ENCODE measurements at regions of chr17 and their contacts with region 1.

Region 1: DNA sequence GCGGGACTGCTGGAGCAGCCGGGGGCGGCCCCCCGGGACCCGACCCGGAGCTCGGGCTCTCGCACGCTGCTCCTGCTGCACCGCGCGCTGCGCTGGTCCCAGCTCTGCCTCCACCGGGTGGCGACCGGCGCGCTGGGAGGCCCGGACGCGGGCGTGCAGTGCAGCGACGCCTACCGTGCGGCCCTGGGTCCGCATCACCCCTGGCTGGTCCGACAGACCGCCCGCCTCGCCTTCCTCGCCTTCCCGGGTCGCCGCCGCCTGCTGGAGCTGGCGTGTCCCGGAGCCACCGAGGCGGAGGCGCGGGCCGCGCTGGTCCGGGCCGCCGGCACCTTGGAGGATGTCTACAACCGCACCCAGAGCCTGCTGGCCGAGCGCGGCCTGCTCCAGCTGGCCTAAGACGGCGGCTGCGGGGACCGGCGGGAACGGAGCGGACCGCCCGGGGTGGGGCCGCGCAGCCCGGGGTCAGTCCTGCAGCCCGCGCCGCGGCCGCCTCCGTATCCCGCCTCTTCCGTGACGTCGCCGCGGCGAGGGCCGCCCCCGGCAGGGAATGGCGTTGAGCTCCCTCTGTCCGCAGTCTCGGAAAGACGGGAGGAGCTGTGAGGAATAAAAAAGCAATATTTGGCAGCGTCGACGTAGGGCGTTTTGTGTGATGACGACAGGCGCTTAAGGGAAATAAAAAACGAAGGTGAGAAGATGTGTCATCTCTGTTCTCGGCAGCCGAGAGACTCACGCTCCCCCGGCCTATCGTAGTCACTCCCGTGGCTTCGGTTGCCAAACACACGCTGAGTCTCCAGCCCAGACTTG is 1.3 kb downstream of the GLTPD2 start:
- DNase-seq: peak; percentile 94
- H3K4me3 ChIP-seq: peak overlapping the region; percentile 59 to 77 (median 72)
- H3K27ac ChIP-seq: peak overlapping the region; percentile 95 to 99 (median 96)
- H3K4me1 ChIP-seq: peaks cover 0 to 46% (median 41%) of the 10 kb centered on the region in 4 donors
- H3K27me3 ChIP-seq: peaks cover 0 to 9% (median 0%) of the 10 kb centered on the region in 3 donors
- CTCF ChIP-seq: peak; percentile 31 to 86 (median 74)
- EP300 ChIP-seq: no peak
- POLR2A ChIP-seq: peak; percentile 91

Region 2: DNA sequence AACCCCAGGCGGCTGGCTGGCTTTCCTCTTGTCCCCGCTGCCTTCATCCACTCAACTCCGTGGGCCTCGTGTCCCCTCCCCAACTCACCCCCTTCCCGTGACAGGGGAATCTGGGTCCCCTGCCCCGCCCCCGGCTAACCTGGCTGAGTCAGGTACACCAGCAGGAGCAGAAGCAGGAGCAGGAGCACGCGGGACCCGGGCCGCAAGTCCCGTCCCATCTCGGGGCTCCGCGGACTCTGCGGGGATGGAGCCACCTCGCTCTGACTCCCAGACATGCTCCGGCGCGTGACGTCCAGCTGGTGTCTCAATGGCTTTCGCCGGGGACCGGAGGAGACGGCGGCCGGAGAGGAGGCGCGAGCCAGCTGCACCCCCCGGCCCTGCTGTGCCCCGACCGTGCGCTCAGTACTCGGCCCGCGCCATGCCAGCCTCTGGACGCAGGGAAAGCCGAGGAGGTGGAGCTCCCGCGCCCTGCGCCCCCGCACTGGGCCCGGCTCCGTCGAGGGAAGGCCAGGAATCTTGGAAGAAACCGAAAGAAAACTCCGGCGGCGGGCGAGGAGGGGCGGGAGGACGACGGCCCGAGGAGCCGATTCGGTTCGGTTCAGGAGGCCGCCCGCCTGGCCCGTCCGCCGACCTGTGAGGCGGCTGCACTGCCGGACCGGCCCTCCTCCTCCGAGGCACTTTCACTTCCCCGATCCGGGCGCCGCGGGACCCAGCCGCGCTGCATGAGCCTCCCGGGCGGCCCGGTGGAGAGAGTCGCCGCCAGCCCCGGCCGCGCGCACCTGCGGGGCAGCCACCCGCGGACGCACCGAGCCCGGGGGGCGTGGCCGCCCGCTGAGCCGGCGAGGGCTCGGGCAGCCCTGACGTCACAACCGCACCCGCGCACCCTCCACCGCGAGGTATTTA is 50.7 kb before region 1 on chr17 and contains the starts of genes CXCL16 and ZMYND15:
- intact Hi-C with region 1: loop called (anchors 2 kb)
- DNase-seq: peak; percentile 77
- H3K4me3 ChIP-seq: peak within 1 kb of the TSS; percentile 63 to 70 (median 67)
- H3K27ac ChIP-seq: peak within 1 kb of the TSS; percentile 60 to 71 (median 64)
- H3K4me1 ChIP-seq: peaks cover 0 to 17% (median 11%) of the 10 kb centered on the region in 4 donors
- H3K27me3 ChIP-seq: peaks cover 0 to 12% (median 4%) of the 10 kb centered on the region in 3 donors
- CTCF ChIP-seq: no peak
- EP300 ChIP-seq: no peak
- POLR2A ChIP-seq: peak in 1 of 2 donors; percentile 11
- total RNA-seq, gene CXCL16: 4.6 to 6.8 (median 5.3) TPM
- total RNA-seq, gene ZMYND15: 0.36 to 0.55 (median 0.49) TPM in 3 of 4 donors, not detected in the other

Region 3: DNA sequence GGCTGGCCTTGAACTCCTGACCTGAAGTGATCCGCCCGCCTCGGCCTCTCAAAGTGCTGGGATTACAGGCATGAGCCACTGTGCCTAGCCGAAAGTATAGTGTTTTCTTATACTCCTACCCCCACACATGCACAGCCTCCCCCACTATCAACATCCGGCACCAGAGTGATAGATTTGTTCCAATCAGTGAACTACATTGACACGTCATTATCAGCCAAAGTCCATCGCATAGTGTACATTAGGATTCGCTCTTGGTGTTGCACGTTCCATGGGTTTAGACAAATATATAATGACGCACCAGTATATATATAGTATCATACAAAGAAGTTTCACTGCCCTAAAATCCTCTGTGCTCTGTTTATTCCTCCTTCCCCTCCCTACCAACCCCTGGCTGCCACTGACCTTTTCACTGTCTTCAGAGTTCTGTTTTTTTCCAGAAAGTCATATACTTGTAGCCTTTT is 30.3 kb before region 1 on chr17:
- intact Hi-C with region 1: no loop called
- DNase-seq: no peak
- H3K4me3 ChIP-seq: no peak overlapping the region
- H3K27ac ChIP-seq: no peak overlapping the region
- H3K4me1 ChIP-seq: no peaks in the 10 kb centered on the region
- H3K27me3 ChIP-seq: peaks cover 0 to 12% (median 0%) of the 10 kb centered on the region in 3 donors
- CTCF ChIP-seq: no peak
- EP300 ChIP-seq: no peak
- POLR2A ChIP-seq: no peak